ENCODE measurements at regions of chr18 and their contacts with region 1.

Region 1: GRCh38 chr18:12947355-12948041 is at the start of gene SEH1L:
- DNase-seq: peak in 7 of 9 donors; percentile 95 to 99 (median 97)
- ATAC-seq: peak; percentile 94
- H3K4me3 ChIP-seq: peak within 1 kb of the TSS; percentile 78
- H3K4me3 Mint-ChIP-seq: peak within 1 kb of the TSS; percentile 89 to 98 (median 95)
- H3K27ac ChIP-seq: peak within 1 kb of the TSS; percentile 92
- H3K27ac Mint-ChIP-seq: peak within 1 kb of the TSS; percentile 93 to 99 (median 97)
- H3K4me1 ChIP-seq: peaks cover 13 to 15% of the 10 kb centered on the region in 2 donors
- H3K4me1 Mint-ChIP-seq: peaks cover 15 to 51% (median 42%) of the 10 kb centered on the region in 7 donors
- H3K27me3 ChIP-seq: no peaks in the 10 kb centered on the region
- H3K27me3 Mint-ChIP-seq: no peaks in the 10 kb centered on the region
- total RNA-seq, gene SEH1L: 32.7 to 54.2 (median 34.2) TPM

Region 2: DNA sequence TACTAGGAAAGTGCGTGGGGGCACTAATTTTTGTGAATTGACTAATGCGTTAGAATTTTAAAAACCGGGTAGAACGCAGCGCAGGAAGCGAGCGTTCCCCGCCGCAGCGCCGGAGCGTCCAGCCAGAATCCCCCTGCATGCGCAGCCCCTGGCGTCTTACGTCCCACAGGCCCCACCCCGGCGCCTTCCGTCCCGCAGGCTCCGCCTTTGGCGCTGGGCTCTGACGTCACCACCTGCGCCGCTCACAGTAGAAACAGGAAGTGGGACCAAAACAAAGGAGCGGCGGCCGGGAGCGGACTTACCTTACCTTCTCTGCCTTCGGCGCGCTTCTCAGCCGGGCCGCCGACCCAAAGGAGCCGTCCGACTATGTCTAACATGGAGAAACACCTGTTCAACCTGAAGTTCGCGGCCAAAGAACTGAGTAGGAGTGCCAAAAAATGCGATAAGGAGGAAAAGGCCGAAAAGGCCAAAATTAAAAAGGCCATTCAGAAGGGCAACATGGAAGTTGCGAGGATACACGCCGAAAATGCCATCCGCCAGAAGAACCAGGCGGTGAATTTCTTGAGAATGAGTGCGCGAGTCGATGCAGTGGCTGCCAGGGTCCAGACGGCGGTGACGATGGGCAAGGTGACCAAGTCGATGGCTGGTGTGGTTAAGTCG is 1096.2 kb before region 1 on chr18 and contains the start of gene CHMP1B:
- CTCF ChIA-PET with region 1: no interaction called
- POLR2A ChIA-PET with region 1: no interaction called
- intact Hi-C with region 1: loop called in 1 of 2 experiments (anchors 1 kb)
- DNase-seq: peak; percentile 95 to 97 (median 97)
- ATAC-seq: peak; percentile 91
- H3K4me3 ChIP-seq: peak within 1 kb of the TSS; percentile 88
- H3K4me3 Mint-ChIP-seq: peak within 1 kb of the TSS; percentile 89 to 100 (median 100)
- H3K27ac ChIP-seq: peak within 1 kb of the TSS; percentile 96
- H3K27ac Mint-ChIP-seq: peak within 1 kb of the TSS; percentile 97 to 100 (median 100)
- H3K4me1 ChIP-seq: peaks cover 19 to 21% of the 10 kb centered on the region in 2 donors
- H3K4me1 Mint-ChIP-seq: peaks cover 16 to 62% (median 50%) of the 10 kb centered on the region in 7 donors
- H3K27me3 ChIP-seq: no peaks in the 10 kb centered on the region
- H3K27me3 Mint-ChIP-seq: peaks cover 0 to 13% (median 0%) of the 10 kb centered on the region in 5 donors
- total RNA-seq, gene CHMP1B: 27.2 to 115 (median 56.1) TPM

Region 3: DNA sequence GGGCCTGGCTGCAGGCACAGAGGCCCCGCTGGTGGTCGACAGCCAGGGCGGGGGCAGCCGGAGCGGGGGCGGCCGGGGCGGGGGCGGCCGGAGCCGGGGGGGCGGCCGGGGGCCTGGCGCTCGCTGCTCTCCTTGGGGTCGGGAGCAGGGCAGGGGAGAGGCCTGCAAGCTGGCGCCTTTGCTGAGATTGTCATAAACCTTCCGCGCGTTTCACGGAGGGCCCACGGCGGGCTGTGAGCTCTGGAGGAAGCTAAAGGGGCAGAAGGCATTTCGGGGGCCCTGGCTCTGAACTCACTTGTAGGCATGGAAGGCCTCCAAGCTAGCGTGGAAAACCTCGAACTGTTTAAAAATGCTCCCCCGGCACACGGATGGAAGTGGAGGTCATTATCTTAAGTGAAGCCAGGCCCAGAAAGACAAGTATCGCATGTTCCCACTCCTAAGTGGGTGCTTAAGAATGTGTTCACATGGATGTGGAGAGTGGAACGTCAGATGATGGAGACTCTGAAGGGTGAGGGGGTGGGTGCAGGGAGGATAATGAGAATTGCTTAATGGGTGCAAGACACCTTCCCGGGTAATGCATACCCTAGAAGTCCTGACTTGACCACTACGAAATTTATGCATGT is 539.1 kb before region 1 on chr18:
- CTCF ChIA-PET with region 1: no interaction called
- POLR2A ChIA-PET with region 1: no interaction called
- intact Hi-C with region 1: loop called in 1 of 2 experiments (anchors 1 kb)
- DNase-seq: no peak
- ATAC-seq: no peak
- H3K4me3 ChIP-seq: no peak overlapping the region
- H3K4me3 Mint-ChIP-seq: peak overlapping the region; percentile 42 to 88 (median 62)
- H3K27ac ChIP-seq: no peak overlapping the region
- H3K27ac Mint-ChIP-seq: peak overlapping the region in 4 of 9 donors; percentile 18 to 65 (median 40)
- H3K4me1 ChIP-seq: peaks cover 9 to 13% of the 10 kb centered on the region in 2 donors
- H3K4me1 Mint-ChIP-seq: peaks cover 10 to 30% (median 25%) of the 10 kb centered on the region in 7 donors
- H3K27me3 ChIP-seq: no peaks in the 10 kb centered on the region
- H3K27me3 Mint-ChIP-seq: peaks cover 7 to 41% (median 25%) of the 10 kb centered on the region in 5 donors

Region 4: DNA sequence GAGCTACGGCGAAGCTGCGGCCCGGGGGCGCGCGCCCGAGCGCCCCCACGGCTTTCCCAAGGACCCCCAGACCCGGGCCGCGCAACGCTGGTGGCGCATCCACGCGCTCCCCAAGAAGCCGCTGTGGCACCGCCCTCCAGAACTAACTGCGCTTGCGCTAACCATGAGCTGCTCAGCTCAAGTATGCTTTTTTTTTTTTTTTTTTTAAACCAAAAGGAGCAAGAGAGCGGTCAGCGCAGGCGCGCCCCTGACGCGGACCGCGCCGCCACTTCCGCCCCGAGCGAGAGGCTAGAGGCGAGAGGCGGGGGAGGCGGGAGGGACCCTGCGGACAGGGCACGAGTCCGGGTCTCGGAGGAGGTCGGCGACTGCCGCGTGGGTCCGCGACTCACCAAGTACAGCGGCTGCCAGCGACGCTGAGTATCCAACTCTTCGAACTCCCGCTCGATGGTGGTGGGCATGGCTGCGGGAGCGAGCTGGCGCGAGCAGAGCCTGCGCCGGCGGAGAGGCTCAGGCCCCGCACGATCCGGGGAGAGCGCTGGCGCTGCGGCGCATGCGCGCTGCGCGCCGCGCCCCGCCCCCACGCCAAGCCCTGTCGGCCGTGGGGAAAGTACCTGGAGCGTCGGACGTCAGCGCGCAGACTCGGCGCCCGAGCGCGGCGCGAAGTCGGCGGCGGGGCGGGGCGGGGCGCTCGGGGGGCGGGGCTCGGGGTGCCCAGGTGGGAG is 63.7 kb before region 1 on chr18 and contains the start of gene PTPN2:
- CTCF ChIA-PET with region 1: no interaction called
- POLR2A ChIA-PET with region 1: interaction called, 15 read pairs
- intact Hi-C with region 1: loop called (anchors 1 kb)
- DNase-seq: peak; percentile 92 to 95 (median 94)
- ATAC-seq: peak; percentile 91
- H3K4me3 ChIP-seq: peak within 1 kb of the TSS; percentile 89
- H3K4me3 Mint-ChIP-seq: peak within 1 kb of the TSS; percentile 91 to 98 (median 96)
- H3K27ac ChIP-seq: peak within 1 kb of the TSS; percentile 99
- H3K27ac Mint-ChIP-seq: peak within 1 kb of the TSS; percentile 93 to 99 (median 96)
- H3K4me1 ChIP-seq: peaks cover 31 to 33% of the 10 kb centered on the region in 2 donors
- H3K4me1 Mint-ChIP-seq: peaks cover 43 to 69% (median 60%) of the 10 kb centered on the region in 7 donors
- H3K27me3 ChIP-seq: no peaks in the 10 kb centered on the region
- H3K27me3 Mint-ChIP-seq: no peaks in the 10 kb centered on the region
- total RNA-seq, gene PTPN2: 55.8 to 82.2 (median 76.2) TPM

Region 5: DNA sequence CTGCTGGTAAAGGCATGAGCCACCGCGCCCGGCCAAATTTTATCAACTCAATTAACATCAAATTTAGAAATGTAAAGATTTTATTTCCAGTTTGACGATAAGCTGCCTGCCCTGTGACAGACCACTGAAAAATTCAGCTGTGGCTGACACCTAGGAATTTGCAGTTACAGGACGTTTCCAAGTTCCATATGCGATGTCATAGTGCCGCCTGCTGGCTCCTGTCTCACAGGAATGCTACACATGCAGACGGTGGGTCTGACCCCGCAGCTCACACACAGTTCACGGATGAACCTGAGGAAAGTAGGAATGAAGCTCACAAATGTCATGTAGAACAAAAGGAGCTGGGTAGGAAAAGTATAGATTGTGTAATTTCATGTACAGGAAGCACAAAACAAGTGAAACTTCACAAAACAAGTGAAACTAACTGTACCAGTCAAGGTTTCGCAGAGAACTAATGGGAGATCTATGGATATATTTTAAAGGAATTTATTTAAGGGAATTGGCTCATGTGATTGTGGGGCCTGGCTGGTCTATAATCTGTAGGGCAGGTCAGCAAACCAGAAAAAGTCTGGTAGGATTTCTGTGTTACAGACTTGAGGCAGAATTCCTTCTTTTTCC is 12.9 kb before region 1 on chr18:
- CTCF ChIA-PET with region 1: no interaction called
- POLR2A ChIA-PET with region 1: interaction called, 3 read pairs
- intact Hi-C with region 1: loop called in 1 of 2 experiments (anchors 1 kb)
- DNase-seq: peak; percentile 53 to 79 (median 71)
- ATAC-seq: peak; percentile 92
- H3K4me3 ChIP-seq: no peak overlapping the region
- H3K4me3 Mint-ChIP-seq: peak overlapping the region in 2 of 10 donors; percentile 38 to 41
- H3K27ac ChIP-seq: no peak overlapping the region
- H3K27ac Mint-ChIP-seq: peak overlapping the region in 2 of 9 donors; percentile 17 to 21
- H3K4me1 ChIP-seq: peaks cover 0 to 6% of the 10 kb centered on the region in 2 donors
- H3K4me1 Mint-ChIP-seq: peaks cover 0 to 5% (median 4%) of the 10 kb centered on the region in 7 donors
- H3K27me3 ChIP-seq: no peaks in the 10 kb centered on the region
- H3K27me3 Mint-ChIP-seq: peaks cover 3 to 16% (median 8%) of the 10 kb centered on the region in 5 donors

Region 6: DNA sequence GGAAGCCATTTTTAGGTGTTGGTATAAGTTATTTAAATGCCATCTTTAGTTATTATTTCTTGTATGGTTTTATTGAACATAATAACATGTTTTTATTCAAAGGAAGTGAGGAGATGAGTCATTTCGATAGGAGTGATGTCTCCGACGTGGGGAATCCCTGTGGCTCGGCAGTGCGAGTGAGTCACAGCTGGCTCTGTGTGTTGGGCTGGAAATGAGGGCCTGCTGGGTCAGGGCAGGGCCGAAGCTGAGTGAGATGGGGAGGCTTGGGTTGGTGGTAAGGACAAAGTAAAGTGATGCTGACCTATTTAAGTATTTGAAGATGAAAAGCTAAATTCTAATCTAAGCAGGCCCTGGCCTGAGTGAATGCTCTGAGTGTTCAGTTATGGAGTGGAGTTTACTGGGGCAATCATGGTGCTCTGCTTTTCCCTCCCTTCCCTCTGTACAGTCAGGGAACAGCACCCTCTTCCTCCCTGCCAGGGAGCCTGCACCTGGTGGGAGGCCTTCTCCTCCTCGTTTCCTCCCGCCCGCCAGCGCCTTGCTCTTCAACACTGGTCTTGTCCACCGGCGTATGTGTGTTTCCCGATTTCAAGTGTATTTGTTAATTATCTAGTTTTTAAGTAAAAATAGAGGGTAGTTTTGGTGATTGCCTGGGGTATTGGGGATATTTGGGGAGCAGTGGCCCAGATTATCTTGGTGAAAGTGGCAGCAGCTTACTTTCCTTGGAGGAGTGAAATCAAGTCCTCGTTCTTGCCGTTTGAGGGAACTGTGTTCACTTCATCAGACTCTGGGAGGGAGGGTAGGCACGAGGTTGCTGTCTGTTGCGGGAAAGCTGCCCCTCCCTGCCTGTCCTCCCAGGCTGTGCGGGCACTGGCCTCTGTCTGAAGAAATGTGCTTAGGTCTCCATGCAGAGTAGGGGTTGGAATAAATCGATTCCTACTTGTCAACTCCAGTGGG is 428.1 kb after region 1 on chr18:
- CTCF ChIA-PET with region 1: no interaction called
- POLR2A ChIA-PET with region 1: no interaction called
- intact Hi-C with region 1: loop called in 1 of 2 experiments (anchors 5 kb)
- DNase-seq: peak in 7 of 9 donors; percentile 29 to 81 (median 54)
- ATAC-seq: peak; percentile 77
- H3K4me3 ChIP-seq: peak overlapping the region; percentile 34
- H3K4me3 Mint-ChIP-seq: peak overlapping the region; percentile 56 to 86 (median 78)
- H3K27ac ChIP-seq: peak overlapping the region; percentile 83
- H3K27ac Mint-ChIP-seq: peak overlapping the region; percentile 92 to 99 (median 96)
- H3K4me1 ChIP-seq: peaks cover 10 to 64% of the 10 kb centered on the region in 2 donors
- H3K4me1 Mint-ChIP-seq: peaks cover 32 to 85% (median 77%) of the 10 kb centered on the region in 7 donors
- H3K27me3 ChIP-seq: no peaks in the 10 kb centered on the region
- H3K27me3 Mint-ChIP-seq: no peaks in the 10 kb centered on the region